Colonic mucosa (tissue), 4 donors: ENCODE measurements at regions of chr12 and their contacts with region 1.

Region 1: DNA sequence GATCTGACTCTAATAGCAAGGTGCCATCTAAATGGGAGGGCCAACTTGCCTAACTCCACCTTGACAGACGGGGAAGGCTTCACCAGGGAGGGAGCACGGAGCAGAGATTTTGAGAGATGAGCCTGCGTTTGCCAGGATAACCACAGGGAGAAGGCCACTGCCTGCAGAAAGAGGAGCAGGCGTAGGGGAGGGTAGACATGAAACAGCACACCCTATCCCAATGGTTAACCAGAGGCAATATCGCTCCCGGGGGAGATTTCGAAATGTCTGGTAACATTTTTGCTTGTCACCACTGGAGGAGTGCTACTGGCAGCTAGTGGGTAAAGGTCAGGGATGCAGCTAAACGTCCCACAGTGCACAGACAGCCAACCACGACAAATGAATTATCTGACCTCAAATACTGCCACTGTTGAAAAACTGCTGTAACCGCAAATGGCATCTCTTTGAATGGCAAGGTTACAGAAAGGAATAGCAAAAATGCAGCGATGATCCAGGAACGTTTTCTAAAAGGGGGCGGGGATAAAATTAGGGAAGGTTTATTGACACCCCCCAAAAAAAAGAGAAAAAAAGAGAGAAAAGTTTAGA is 126.0 kb upstream of the ATF7IP start:
- DNase-seq: peak; percentile 52
- H3K4me3 ChIP-seq: no peak overlapping the region
- H3K27ac ChIP-seq: peak overlapping the region; percentile 21
- H3K4me1 ChIP-seq: no peaks in the 10 kb centered on the region
- H3K27me3 ChIP-seq: no peaks in the 10 kb centered on the region
- CTCF ChIP-seq: no peak

Region 2: DNA sequence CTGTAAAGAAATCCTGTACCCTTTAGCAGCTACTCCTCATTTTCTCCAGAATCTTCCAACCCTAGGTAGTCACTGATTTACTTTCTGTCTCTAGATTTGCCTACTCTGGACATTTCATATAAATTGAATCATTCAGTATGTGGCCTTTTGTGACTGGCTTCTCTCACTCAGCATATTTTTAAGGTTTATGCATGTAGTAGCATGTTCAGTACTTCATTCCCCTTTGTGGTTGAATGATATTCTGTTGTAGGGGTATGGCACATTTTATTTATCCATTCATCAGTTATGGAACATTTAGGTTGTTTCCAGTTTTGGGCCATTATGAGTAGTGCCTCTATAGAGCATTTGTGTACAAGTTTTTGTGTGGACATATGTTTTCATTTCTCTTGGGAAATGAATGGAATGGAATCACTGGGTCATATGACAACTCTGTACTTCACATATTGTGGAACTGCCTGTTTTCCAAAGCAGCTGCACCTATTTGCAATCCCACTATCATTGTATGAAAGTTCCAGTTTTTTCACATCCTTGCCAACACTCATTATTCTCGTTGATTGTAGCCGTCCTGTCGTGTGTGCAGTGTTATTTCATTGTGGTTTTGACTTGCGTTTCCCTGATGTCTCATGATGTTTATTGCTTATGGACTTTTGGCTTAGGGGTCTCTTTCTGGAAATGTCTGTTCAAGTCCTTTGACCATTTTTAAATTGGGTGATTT is 183.2 kb after region 1 on chr12:
- intact Hi-C with region 1: loop called (anchors 5 kb)
- DNase-seq: no peak
- H3K4me3 ChIP-seq: no peak overlapping the region
- H3K27ac ChIP-seq: no peak overlapping the region
- H3K4me1 ChIP-seq: peaks cover 5% of the 10 kb centered on the region
- H3K27me3 ChIP-seq: no peaks in the 10 kb centered on the region
- CTCF ChIP-seq: no peak

Region 3: GRCh38 chr12:14664510-14664909 is 425.1 kb after region 1 on chr12:
- intact Hi-C with region 1: loop called (anchors 10 kb)
- DNase-seq: peak; percentile 56
- H3K4me3 ChIP-seq: no peak overlapping the region
- H3K27ac ChIP-seq: no peak overlapping the region
- H3K4me1 ChIP-seq: no peaks in the 10 kb centered on the region
- H3K27me3 ChIP-seq: no peaks in the 10 kb centered on the region
- CTCF ChIP-seq: peak; percentile 47

Region 4: DNA sequence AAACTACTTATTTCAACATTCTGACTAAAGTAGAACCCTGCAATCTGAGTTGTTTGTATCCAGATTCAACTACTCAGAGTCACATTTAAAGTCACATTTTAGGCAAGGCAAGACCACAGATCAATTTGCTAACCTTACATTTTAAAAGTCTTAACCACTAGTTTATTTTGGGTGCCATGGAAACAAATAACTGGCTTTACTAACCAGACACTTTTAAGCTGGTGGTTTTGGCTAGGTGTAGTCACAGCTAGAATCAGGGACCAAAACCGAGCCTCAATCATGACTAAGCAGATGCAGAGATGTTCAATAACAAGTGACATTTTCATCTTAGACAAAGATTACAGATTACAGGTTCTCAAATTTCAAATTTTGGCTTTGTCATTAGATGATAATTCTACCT is 848.7 kb after region 1 on chr12:
- intact Hi-C with region 1: no loop called
- DNase-seq: no peak
- H3K4me3 ChIP-seq: no peak overlapping the region
- H3K27ac ChIP-seq: no peak overlapping the region
- H3K4me1 ChIP-seq: no peaks in the 10 kb centered on the region
- H3K27me3 ChIP-seq: no peaks in the 10 kb centered on the region
- CTCF ChIP-seq: no peak